Right ventricle myocardium superior (tissue), 1 donor: ENCODE measurements at regions of chr12 and their contacts with region 1.

Region 1: GRCh38 chr12:66403746-66404145 is 101.5 kb downstream of the HELB start:
- DNase-seq: peak; percentile 43
- ATAC-seq: peak; percentile 67

Region 2: GRCh38 chr12:66279123-66279712 is 124.5 kb before region 1 on chr12:
- intact Hi-C with region 1: loop called (anchors 5 kb)
- DNase-seq: no peak
- ATAC-seq: no peak